ENCODE measurements at regions of chr10 and their contacts with region 1.

Region 1: DNA sequence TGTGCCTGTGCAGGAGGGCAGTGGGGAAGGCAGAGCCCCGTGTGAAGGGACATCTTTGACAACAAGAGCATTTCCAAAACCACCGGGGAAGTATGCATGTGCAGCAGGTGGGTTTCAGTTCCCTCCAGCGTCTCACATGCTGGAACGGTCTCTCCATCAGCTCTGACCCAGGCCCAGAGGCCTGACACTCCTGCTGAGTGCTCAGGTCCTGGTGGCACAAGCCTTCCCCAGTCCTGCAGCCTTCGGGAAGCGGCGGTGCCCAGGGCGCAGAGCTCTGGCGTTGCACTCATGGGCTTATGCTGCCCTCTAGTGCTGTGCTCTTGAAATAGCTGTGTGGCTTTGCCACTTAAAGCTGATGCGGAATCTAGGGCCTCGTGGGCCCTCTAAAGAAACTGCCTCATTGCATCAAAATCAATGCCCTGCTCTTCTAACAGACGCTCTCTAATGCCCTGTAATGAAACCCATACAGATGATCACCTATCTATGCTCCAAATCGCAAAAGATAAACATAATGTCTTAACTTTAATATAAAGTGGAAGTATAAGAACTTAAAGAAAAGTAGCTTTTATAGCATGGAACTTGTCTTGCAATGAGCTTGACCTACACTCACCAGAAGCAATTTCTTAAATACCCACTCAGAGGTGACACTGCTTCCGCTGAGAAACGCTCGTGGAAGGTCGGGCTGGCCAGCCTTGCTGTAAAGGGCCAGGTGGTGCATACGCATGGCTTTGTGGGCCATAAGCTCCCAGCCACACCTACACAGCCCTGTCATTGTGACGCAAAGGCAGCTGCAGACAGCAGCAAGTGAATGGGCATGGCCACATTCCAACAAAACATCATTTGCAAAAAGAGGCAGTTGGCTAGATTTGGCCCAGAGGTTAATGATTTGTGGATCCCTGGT is 38.6 kb downstream of the CLRN3 start:
- DNase-seq: no peak
- H3K4me3 Mint-ChIP-seq: no peak overlapping the region
- H3K27ac Mint-ChIP-seq: no peak overlapping the region
- H3K4me1 Mint-ChIP-seq: no peaks in the 10 kb centered on the region
- H3K27me3 Mint-ChIP-seq: no peaks in the 10 kb centered on the region

Region 2: GRCh38 chr10:127563718-127564553 is 290.2 kb before region 1 on chr10:
- intact Hi-C with region 1: loop called (anchors 5 kb)
- DNase-seq: no peak
- H3K4me3 Mint-ChIP-seq: no peak overlapping the region
- H3K27ac Mint-ChIP-seq: no peak overlapping the region
- H3K4me1 Mint-ChIP-seq: no peaks in the 10 kb centered on the region
- H3K27me3 Mint-ChIP-seq: no peaks in the 10 kb centered on the region

Region 3: DNA sequence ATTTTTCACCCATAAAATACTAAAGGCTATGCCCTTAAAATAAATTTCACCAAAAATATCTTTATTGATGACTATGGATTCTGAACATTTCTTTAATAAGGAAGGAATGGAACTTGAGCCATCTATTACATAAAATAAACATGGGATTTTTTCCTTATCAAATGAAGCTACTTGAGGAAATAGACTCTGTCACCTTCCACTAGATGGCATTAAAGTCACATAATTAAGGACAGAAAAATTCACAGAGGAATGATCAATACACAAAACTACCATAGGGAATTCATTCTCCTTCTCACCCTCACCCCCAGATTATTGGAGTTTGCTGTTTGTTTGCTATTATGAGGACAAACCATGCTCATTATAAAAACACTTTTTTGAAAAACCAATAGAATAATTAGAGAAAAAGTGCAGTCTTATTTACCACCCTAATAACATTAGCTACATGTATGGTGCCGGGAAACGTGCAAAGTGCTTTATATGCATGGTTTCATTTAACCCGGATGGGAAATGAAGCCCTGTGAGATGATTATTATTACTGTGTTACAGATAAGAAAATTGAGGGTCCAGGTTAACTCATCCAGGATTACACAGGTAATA is 138.2 kb before region 1 on chr10:
- intact Hi-C with region 1: loop called (anchors 2 kb)
- DNase-seq: no peak
- H3K4me3 Mint-ChIP-seq: no peak overlapping the region
- H3K27ac Mint-ChIP-seq: no peak overlapping the region
- H3K4me1 Mint-ChIP-seq: no peaks in the 10 kb centered on the region
- H3K27me3 Mint-ChIP-seq: no peaks in the 10 kb centered on the region

Region 4: GRCh38 chr10:127781412-127781811 is 72.7 kb before region 1 on chr10:
- intact Hi-C with region 1: no loop called
- DNase-seq: no peak
- H3K4me3 Mint-ChIP-seq: no peak overlapping the region
- H3K27ac Mint-ChIP-seq: no peak overlapping the region
- H3K4me1 Mint-ChIP-seq: no peaks in the 10 kb centered on the region
- H3K27me3 Mint-ChIP-seq: no peaks in the 10 kb centered on the region

Region 5: GRCh38 chr10:128018236-128018635 is 164.1 kb after region 1 on chr10:
- intact Hi-C with region 1: no loop called
- DNase-seq: no peak
- H3K4me3 Mint-ChIP-seq: no peak overlapping the region
- H3K27ac Mint-ChIP-seq: no peak overlapping the region
- H3K4me1 Mint-ChIP-seq: peaks cover 7% of the 10 kb centered on the region
- H3K27me3 Mint-ChIP-seq: no peaks in the 10 kb centered on the region